ENCODE measurements at regions of chrX and their contacts with region 1.

Region 1: GRCh38 chrX:130916636-130917422 is 13.8 kb upstream of the ENOX2 start:
- DNase-seq: peak in 1 of 2 donors; percentile 64
- H3K4me3 ChIP-seq: no peak overlapping the region
- H3K27ac ChIP-seq: no peak overlapping the region
- H3K4me1 ChIP-seq: no peaks in the 10 kb centered on the region
- H3K27me3 ChIP-seq: no peaks in the 10 kb centered on the region
- CTCF ChIP-seq: peak; percentile 62 to 67

Region 2: DNA sequence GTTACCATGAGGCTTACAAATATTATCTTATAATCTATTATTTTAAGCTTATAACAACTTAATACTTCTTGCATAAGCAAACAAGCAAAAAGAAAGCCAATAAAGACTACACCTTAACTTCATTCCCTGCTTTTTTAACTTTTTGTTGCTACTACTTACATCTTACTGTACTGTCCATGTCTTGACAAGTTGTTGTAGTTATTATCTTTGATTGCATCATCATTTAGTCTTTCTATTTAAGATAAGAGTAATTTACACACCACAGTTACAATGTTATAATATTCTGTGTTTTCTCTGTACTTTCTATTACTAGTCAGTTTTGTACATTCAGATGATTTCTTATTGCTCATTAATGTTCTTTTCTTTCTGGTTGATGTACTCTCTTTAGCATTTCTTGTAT is 1740.1 kb before region 1 on chrX:
- intact Hi-C with region 1: no loop called
- DNase-seq: no peak
- H3K4me3 ChIP-seq: no peak overlapping the region
- H3K27ac ChIP-seq: no peak overlapping the region
- H3K4me1 ChIP-seq: no peaks in the 10 kb centered on the region
- H3K27me3 ChIP-seq: no peaks in the 10 kb centered on the region
- CTCF ChIP-seq: no peak

Region 3: GRCh38 chrX:130539721-130540321 is 377.0 kb before region 1 on chrX:
- intact Hi-C with region 1: loop called (anchors 10 kb)
- DNase-seq: peak; percentile 22 to 63
- H3K4me3 ChIP-seq: no peak overlapping the region
- H3K27ac ChIP-seq: no peak overlapping the region
- H3K4me1 ChIP-seq: no peaks in the 10 kb centered on the region
- H3K27me3 ChIP-seq: no peaks in the 10 kb centered on the region
- CTCF ChIP-seq: peak; percentile 44 to 47

Region 4: GRCh38 chrX:130575831-130576389 is 340.9 kb before region 1 on chrX:
- intact Hi-C with region 1: loop called (anchors 10 kb)
- DNase-seq: peak; percentile 20 to 62
- H3K4me3 ChIP-seq: no peak overlapping the region
- H3K27ac ChIP-seq: no peak overlapping the region
- H3K4me1 ChIP-seq: no peaks in the 10 kb centered on the region
- H3K27me3 ChIP-seq: no peaks in the 10 kb centered on the region
- CTCF ChIP-seq: peak; percentile 59 to 73

Region 5: GRCh38 chrX:130772105-130772775 is 144.6 kb before region 1 on chrX:
- intact Hi-C with region 1: no loop called
- DNase-seq: no peak
- H3K4me3 ChIP-seq: no peak overlapping the region
- H3K27ac ChIP-seq: no peak overlapping the region
- H3K4me1 ChIP-seq: peaks cover 0 to 9% (median 0%) of the 10 kb centered on the region in 4 donors
- H3K27me3 ChIP-seq: no peaks in the 10 kb centered on the region
- CTCF ChIP-seq: no peak

Measured in tibial artery (tissue), 4 donors.